Activated CD4-positive, alpha-beta T cell treated with anti-CD3 and anti-CD28 coated beads for 36 hours (primary cell): ENCODE measurements at regions of chr14 and their contacts with region 1.

Region 1: GRCh38 chr14:92121670-92122350 is at the starts of genes CPSF2 and NDUFB1:
- DNase-seq: peak; percentile 90
- ATAC-seq: peak; percentile 92
- H3K4me3 Mint-ChIP-seq: peak within 1 kb of the TSS; percentile 77
- H3K27ac Mint-ChIP-seq: peak within 1 kb of the TSS; percentile 100
- H3K4me1 Mint-ChIP-seq: peaks cover 34% of the 10 kb centered on the region
- H3K27me3 Mint-ChIP-seq: no peaks in the 10 kb centered on the region
- total RNA-seq, gene CPSF2: 102 to 117 TPM
- total RNA-seq, gene NDUFB1: 68.9 to 118 TPM

Region 2: GRCh38 chr14:92039719-92040430 is 81.9 kb before region 1 on chr14 and contains the start of gene TRIP11:
- CTCF ChIA-PET with region 1: interaction called, 3 read pairs
- POLR2A ChIA-PET with region 1: interaction called, 9 read pairs
- intact Hi-C with region 1: loop called in 1 of 2 experiments (anchors 1 kb)
- DNase-seq: peak; percentile 98
- ATAC-seq: peak; percentile 95
- H3K4me3 Mint-ChIP-seq: peak within 1 kb of the TSS; percentile 92
- H3K27ac Mint-ChIP-seq: peak within 1 kb of the TSS; percentile 98
- H3K4me1 Mint-ChIP-seq: peaks cover 42% of the 10 kb centered on the region
- H3K27me3 Mint-ChIP-seq: no peaks in the 10 kb centered on the region
- total RNA-seq, gene TRIP11: 35.7 to 41.0 TPM

Region 3: GRCh38 chr14:92106143-92106926 is 15.5 kb before region 1 on chr14 and contains the start of gene ATXN3:
- CTCF ChIA-PET with region 1: interaction called, 125 read pairs
- POLR2A ChIA-PET with region 1: interaction called, 59 read pairs
- intact Hi-C with region 1: loop called (anchors 1 kb)
- DNase-seq: peak; percentile 98
- ATAC-seq: peak; percentile 97
- H3K4me3 Mint-ChIP-seq: peak within 1 kb of the TSS; percentile 90
- H3K27ac Mint-ChIP-seq: peak within 1 kb of the TSS; percentile 92
- H3K4me1 Mint-ChIP-seq: peaks cover 42% of the 10 kb centered on the region
- H3K27me3 Mint-ChIP-seq: no peaks in the 10 kb centered on the region
- total RNA-seq, gene ATXN3: 32.7 to 36.0 TPM

Region 4: DNA sequence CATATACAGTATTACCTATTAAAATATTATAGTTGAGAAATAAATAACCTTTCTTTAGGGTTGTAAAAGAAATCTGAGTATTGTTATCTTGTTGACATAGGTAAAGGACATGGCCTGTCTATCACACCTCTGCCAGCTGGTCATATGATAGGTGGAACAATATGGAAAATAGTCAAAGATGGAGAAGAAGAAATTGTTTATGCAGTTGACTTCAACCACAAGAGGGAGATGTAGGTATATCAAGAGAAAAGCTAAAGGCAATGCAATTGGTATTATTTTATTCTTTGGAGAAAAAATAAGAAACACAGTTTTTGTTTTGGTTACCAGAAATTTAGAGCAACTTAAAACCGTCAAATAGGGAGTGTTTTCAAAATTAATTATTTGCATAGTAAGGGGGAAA is 13.5 kb after region 1 on chr14:
- CTCF ChIA-PET with region 1: interaction called, 12 read pairs
- POLR2A ChIA-PET with region 1: interaction called, 4 read pairs
- intact Hi-C with region 1: no loop called
- DNase-seq: no peak
- ATAC-seq: no peak
- H3K4me3 Mint-ChIP-seq: no peak overlapping the region
- H3K27ac Mint-ChIP-seq: no peak overlapping the region
- H3K4me1 Mint-ChIP-seq: no peaks in the 10 kb centered on the region
- H3K27me3 Mint-ChIP-seq: no peaks in the 10 kb centered on the region

Region 5: DNA sequence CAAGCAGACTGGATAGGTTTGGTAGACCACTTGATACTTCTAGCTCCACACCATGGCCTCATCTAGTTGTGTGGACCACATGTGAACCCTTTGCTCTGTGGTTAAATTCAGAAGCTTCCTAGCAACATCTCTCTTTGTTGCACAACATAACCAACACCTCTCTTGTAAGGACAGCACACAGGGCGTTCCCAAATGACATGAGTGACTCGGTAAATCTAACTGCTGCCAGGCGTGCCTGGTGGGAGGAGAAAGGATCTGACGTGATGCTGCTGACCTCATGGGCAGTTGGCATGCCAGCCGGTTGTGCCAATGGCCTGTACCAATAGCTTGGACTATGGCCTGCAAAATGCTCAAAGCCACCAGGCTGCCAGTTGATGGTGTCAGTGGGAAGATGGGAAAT is 93.8 kb after region 1 on chr14:
- CTCF ChIA-PET with region 1: no interaction called
- POLR2A ChIA-PET with region 1: no interaction called
- intact Hi-C with region 1: no loop called
- DNase-seq: no peak
- ATAC-seq: no peak
- H3K4me3 Mint-ChIP-seq: no peak overlapping the region
- H3K27ac Mint-ChIP-seq: no peak overlapping the region
- H3K4me1 Mint-ChIP-seq: peaks cover 3% of the 10 kb centered on the region
- H3K27me3 Mint-ChIP-seq: peaks cover 3% of the 10 kb centered on the region

Region 6: DNA sequence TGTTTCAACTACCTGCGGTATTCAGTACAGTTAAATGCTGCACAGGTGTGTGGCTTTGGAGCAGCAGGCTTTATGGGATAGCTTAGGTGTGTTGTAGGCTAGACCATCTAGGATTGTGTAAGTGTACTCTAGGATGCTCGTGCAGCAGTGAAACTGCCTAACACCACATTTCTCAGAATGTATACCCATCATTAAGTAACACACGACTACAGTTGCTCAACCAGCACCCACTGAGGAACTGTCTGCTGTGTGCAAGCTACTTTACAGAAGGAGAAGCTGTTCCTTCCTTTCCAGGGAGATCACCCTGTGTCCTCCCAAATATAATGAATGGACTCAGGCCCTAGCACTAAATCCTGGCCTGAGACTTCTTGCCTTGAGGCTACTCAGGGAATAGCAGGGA is 295.9 kb after region 1 on chr14:
- CTCF ChIA-PET with region 1: no interaction called
- POLR2A ChIA-PET with region 1: no interaction called
- intact Hi-C with region 1: no loop called
- DNase-seq: no peak
- ATAC-seq: no peak
- H3K4me3 Mint-ChIP-seq: no peak overlapping the region
- H3K27ac Mint-ChIP-seq: no peak overlapping the region
- H3K4me1 Mint-ChIP-seq: no peaks in the 10 kb centered on the region
- H3K27me3 Mint-ChIP-seq: no peaks in the 10 kb centered on the region